HCT116 (cell line): ENCODE measurements at regions of chr5 and their contacts with region 1.

Region 1: GRCh38 chr5:177497292-177498033 is at the start of gene PDLIM7:
- DNase-seq: peak; percentile 92
- ATAC-seq: peak; percentile 72
- H3K4me3 ChIP-seq: peak within 1 kb of the TSS; percentile 88 to 89
- H3K27ac ChIP-seq: peak within 1 kb of the TSS; percentile 96
- H3K4me1 ChIP-seq: peaks cover 39 to 63% of the 10 kb centered on the region in 2 experiments
- H3K27me3 ChIP-seq: no peaks in the 10 kb centered on the region
- CTCF ChIP-seq: no peak
- POLR2A ChIP-seq: peak; percentile 92
- RAD21 ChIP-seq: no peak
- total RNA-seq, gene PDLIM7: 153 TPM

Region 2: GRCh38 chr5:177303121-177303924 is 194.1 kb before region 1 on chr5 and contains the starts of genes PRELID1 and RAB24:
- CTCF ChIA-PET with region 1: no interaction called
- POLR2A ChIA-PET with region 1: no interaction called
- RAD21 ChIA-PET with region 1: no interaction called
- intact Hi-C with region 1: loop called (anchors 5 kb)
- DNase-seq: no peak
- ATAC-seq: peak; percentile 58
- H3K4me3 ChIP-seq: peak within 1 kb of the TSS; percentile 88 to 99
- H3K27ac ChIP-seq: peak within 1 kb of the TSS; percentile 72
- H3K4me1 ChIP-seq: peaks cover 19 to 63% of the 10 kb centered on the region in 2 experiments
- H3K27me3 ChIP-seq: no peaks in the 10 kb centered on the region
- CTCF ChIP-seq: peak in 2 of 3 experiments; percentile 33 to 36; a peak in 3 of 6 replicates
- POLR2A ChIP-seq: peak; percentile 69
- RAD21 ChIP-seq: no peak
- total RNA-seq, gene PRELID1: 223 TPM
- total RNA-seq, gene RAB24: 13.5 TPM

Region 3: GRCh38 chr5:177311723-177312648 is 185.5 kb before region 1 on chr5 and contains the start of gene MXD3:
- CTCF ChIA-PET with region 1: interaction called, 8 read pairs
- POLR2A ChIA-PET with region 1: interaction called, 3 read pairs
- RAD21 ChIA-PET with region 1: no interaction called
- intact Hi-C with region 1: loop called (anchors 5 kb)
- DNase-seq: peak; percentile 91
- ATAC-seq: peak; percentile 77
- H3K4me3 ChIP-seq: peak within 1 kb of the TSS; percentile 82 to 87
- H3K27ac ChIP-seq: peak within 1 kb of the TSS; percentile 82
- H3K4me1 ChIP-seq: peaks cover 18 to 45% of the 10 kb centered on the region in 2 experiments
- H3K27me3 ChIP-seq: no peaks in the 10 kb centered on the region
- CTCF ChIP-seq: no peak
- POLR2A ChIP-seq: no peak
- RAD21 ChIP-seq: no peak
- total RNA-seq, gene MXD3: 37.6 TPM

Region 4: GRCh38 chr5:177390363-177391300 is 106.8 kb before region 1 on chr5:
- CTCF ChIA-PET with region 1: interaction called, 18 read pairs
- POLR2A ChIA-PET with region 1: interaction called, 8 read pairs
- RAD21 ChIA-PET with region 1: interaction called, 3 to 5 read pairs
- intact Hi-C with region 1: loop called (anchors 1 kb)
- DNase-seq: peak; percentile 81
- ATAC-seq: peak; percentile 78
- H3K4me3 ChIP-seq: no peak overlapping the region
- H3K27ac ChIP-seq: peak overlapping the region; percentile 63
- H3K4me1 ChIP-seq: peaks cover 24 to 43% of the 10 kb centered on the region in 2 experiments
- H3K27me3 ChIP-seq: no peaks in the 10 kb centered on the region
- CTCF ChIP-seq: peak in 2 of 3 experiments; percentile 94 to 96; a peak in 4 of 6 replicates
- POLR2A ChIP-seq: no peak
- RAD21 ChIP-seq: no peak

Region 5: GRCh38 chr5:177403792-177404640 is 93.4 kb before region 1 on chr5:
- CTCF ChIA-PET with region 1: interaction called, 17 read pairs
- POLR2A ChIA-PET with region 1: interaction called, 10 read pairs
- RAD21 ChIA-PET with region 1: interaction called in 1 of 2 experiments, 3 read pairs
- intact Hi-C with region 1: loop called (anchors 5 kb)
- DNase-seq: peak; percentile 56
- ATAC-seq: peak; percentile 72
- H3K4me3 ChIP-seq: peak overlapping the region; percentile 69 to 82
- H3K27ac ChIP-seq: peak overlapping the region; percentile 99
- H3K4me1 ChIP-seq: peaks cover 15 to 37% of the 10 kb centered on the region in 2 experiments
- H3K27me3 ChIP-seq: no peaks in the 10 kb centered on the region
- CTCF ChIP-seq: peak in 2 of 3 experiments; percentile 55 to 69; a peak in 4 of 6 replicates
- POLR2A ChIP-seq: no peak
- RAD21 ChIP-seq: no peak

Region 6: DNA sequence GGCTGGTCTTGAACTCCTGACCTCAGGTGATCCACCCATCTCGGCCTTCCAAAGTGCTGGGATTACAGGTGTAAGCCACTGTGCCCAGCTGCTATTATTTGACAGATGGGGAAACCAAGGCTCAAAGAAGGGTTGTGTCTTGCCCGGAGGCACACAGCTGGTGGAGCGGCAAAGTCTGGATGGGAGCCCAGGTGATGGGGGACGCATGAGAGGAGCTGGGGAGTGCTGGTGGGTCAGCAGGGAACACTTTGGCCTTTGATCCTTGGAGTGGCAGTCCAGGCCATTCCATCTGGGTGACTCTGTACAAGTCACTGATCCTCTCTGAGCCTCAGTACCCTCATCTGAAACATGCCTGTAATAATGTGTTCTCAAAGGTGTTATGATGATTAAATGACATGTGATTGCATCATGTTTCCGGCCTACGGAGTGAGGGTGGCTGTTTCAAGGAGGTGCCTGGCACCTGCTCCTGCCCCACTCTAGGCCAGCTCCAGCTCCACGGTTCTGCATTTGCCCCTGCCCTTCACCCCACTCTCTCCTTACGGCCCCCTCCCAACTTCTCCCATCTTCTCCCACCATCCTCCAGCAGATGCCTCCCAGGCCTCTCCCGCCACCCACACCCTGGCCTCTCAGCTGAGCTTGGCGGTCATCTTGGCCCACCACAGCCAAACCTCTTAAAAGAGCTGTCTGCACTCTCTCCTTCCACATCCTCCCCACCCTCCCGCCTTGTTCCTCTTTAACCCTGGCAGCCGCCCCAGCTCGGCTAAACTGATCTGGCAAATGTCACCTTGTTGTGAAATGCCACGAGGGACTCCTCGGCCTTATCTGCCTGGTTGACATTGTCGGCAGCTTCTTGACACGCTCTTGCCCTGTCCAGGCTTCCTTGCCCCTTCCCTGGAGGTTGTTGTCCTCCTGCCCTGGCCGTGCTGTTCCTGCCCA is 18.5 kb before region 1 on chr5:
- CTCF ChIA-PET with region 1: interaction called, 6 read pairs
- POLR2A ChIA-PET with region 1: interaction called, 54 read pairs
- RAD21 ChIA-PET with region 1: interaction called in 1 of 2 experiments, 3 read pairs
- intact Hi-C with region 1: loop called (anchors 1 kb)
- DNase-seq: no peak
- ATAC-seq: no peak
- H3K4me3 ChIP-seq: no peak overlapping the region
- H3K27ac ChIP-seq: no peak overlapping the region
- H3K4me1 ChIP-seq: peaks cover 2 to 21% of the 10 kb centered on the region in 2 experiments; a peak in 2 of 4 replicates
- H3K27me3 ChIP-seq: no peaks in the 10 kb centered on the region
- CTCF ChIP-seq: no peak
- POLR2A ChIP-seq: no peak
- RAD21 ChIP-seq: no peak

Region 7: DNA sequence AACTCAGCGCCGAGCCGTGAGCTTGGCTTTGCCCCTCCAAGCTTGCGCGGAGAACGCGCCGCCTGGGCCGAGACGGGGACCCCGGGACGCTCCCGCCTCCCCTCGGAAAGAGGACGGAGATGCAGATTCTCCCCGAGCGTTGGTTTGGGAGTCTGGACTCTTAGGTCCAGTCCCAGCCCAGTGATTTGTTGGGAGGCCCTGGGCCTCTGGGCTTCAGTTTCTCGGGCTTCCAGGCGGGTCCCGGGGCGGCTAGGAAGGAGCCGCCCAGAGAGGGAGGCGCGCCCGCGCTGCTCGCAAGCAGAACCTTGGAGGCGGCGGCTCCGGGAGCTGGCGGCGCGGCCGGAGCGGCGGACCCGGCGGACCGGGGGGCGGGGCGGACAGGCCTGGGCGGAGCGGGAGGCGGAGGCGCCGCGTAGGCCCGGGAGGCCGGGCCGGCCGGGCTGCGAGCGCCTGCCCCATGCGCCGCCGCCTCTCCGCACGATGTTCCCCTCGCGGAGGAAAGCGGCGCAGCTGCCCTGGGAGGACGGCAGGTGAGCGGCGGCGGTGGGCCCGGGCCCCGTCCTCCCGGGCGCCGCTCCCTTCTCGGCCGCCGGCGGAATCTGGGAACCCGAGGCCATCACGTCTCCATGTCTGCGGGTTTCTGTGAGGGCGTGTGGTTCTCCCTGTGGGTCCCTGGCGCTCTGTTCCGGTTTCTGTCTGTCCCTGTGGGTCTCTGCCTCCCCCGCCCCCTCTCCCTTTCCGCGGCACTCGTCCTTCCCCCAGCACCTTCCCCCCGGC is 102.5 kb after region 1 on chr5 and contains the start of gene B4GALT7:
- CTCF ChIA-PET with region 1: no interaction called
- POLR2A ChIA-PET with region 1: interaction called, 3 read pairs
- RAD21 ChIA-PET with region 1: interaction called in 1 of 2 experiments, 3 read pairs
- intact Hi-C with region 1: loop called (anchors 5 kb)
- DNase-seq: no peak
- ATAC-seq: peak; percentile 83
- H3K4me3 ChIP-seq: peak within 1 kb of the TSS; percentile 88 to 90
- H3K27ac ChIP-seq: peak within 1 kb of the TSS; percentile 76
- H3K4me1 ChIP-seq: peaks cover 19 to 39% of the 10 kb centered on the region in 2 experiments
- H3K27me3 ChIP-seq: no peaks in the 10 kb centered on the region
- CTCF ChIP-seq: no peak
- POLR2A ChIP-seq: peak; percentile 74
- RAD21 ChIP-seq: no peak
- total RNA-seq, gene B4GALT7: 25.2 TPM